GM13976 (cell line): ENCODE measurements at regions of chr15 and their contacts with region 1.

Region 1: GRCh38 chr15:91224755-91225380 is 124.8 kb downstream of the SV2B start:
- DNase-seq: peak; percentile 61
- CTCF ChIP-seq: peak; percentile 52

Region 2: DNA sequence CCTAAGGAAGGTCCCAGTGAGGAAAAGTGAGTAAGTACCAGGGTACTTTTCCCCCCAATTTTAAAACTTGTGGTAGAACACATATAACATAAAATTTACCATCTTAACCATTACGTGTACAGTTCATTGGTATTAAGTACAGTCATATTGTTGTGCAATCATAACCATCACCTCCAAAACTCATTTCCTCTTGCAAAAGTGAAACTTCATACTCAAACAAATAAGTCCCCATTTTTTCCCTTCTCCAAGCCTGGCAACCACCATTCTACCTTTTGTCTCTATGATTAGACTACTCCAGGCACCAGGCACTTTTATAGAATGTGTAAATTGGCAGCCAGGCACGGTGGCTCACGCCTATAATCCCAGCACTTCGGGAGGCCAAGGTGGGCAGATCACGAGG is 242.7 kb before region 1 on chr15:
- in situ Hi-C with region 1: no loop called
- DNase-seq: no peak
- CTCF ChIP-seq: no peak

Region 3: DNA sequence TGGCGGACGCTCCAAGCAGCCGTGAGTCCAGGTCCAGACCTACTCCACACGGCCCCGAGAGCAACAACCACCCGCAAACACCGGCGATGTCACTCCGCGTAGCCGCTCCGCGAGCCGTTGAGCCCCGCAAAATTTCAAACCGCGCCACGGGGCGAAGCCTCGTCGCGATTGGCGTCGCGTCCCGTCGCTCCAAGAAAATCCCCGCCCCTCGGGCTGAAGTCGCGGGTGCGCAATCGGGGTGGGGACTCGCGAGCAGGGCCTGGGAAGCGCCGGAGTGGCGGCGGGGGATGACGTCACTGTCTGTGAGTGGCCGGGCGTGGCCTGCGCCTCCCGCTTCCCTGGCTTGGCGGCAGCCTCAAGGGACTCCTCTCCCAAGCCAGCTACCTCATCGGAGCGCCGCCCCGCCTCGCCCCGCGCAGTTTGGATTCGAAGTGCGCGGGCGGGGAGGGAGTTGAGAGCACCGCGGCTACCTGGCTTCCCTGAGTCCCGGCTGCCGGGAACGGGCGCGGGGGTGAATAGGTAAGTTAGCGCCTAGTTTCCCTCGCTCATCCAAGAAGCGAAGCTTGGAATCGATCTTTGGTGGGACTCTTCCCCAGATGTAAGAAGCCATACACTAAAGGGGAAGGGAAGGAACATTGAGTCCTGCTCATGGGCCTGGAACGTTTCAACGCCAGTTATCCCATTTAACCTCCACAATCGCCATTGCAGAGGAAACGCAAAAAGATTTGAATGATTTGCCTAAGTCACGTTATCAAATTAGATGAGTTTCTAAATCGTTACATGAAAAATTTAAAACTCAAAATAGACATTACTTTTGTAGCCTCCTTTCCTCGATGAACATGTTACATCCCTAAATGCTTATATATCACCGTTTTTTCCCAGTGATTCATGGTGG is 230.2 kb before region 1 on chr15 and contains the start of gene PRC1:
- in situ Hi-C with region 1: no loop called
- DNase-seq: peak; percentile 100
- CTCF ChIP-seq: no peak

Region 4: DNA sequence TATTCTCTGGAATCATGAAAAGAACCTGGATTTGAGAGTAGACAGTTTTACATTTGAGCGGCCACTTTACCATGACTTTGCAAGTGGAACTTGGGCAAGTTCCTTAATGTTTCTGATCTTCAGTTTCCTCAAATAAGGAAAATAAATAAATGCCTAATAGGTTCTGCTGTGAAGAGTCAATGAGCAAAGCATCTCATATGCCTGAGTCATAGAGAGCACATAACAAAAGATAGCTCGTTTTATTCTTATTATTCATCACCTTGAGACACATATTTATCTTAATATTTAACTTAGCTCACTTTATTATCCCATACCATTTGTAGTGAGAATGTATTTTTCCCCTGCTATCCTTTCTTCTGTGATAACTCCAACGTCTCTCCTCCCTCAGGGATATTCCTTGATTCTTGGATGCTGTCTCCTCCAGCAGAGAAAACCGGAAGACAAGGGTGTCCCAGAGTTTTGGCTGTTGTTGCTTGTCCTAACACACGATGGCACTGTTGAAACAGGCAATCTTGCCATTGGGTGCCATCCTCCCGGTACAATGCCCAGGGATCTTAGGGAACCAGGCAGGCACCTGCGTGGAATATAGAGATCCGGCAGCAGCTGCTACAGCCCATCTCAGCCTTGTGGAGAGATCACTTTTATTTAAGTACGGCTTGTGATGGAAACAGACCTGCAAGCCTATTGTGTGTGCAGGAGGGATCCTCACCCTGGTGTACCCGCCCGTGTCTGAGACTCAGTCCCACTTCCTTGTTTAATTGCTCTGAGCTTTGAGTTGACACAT is 169.1 kb before region 1 on chr15:
- in situ Hi-C with region 1: loop called (anchors 5 kb)
- DNase-seq: peak; percentile 60
- CTCF ChIP-seq: peak; percentile 78

Region 5: DNA sequence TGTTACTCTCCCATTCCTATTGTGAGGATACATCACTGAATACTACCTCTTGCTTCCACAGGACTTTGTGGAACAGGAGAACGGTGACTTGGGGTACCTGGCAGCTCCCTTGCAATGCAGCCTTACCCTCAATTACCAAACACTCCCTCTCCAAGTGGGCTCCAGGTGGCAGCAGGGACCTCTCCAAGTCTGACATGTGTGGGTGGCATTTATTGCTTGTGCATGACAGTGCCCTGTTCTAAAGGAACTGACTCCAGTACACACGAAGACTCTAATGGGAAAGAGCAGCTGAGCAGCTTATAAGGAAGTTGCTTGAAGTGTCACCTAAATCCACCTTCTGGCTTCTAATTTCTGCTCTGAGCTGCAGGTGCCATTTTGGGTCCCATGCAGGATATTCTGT is 454.6 kb after region 1 on chr15:
- in situ Hi-C with region 1: no loop called
- DNase-seq: no peak
- CTCF ChIP-seq: no peak